ENCODE measurements at regions of chr3 and their contacts with region 1.

Region 1: DNA sequence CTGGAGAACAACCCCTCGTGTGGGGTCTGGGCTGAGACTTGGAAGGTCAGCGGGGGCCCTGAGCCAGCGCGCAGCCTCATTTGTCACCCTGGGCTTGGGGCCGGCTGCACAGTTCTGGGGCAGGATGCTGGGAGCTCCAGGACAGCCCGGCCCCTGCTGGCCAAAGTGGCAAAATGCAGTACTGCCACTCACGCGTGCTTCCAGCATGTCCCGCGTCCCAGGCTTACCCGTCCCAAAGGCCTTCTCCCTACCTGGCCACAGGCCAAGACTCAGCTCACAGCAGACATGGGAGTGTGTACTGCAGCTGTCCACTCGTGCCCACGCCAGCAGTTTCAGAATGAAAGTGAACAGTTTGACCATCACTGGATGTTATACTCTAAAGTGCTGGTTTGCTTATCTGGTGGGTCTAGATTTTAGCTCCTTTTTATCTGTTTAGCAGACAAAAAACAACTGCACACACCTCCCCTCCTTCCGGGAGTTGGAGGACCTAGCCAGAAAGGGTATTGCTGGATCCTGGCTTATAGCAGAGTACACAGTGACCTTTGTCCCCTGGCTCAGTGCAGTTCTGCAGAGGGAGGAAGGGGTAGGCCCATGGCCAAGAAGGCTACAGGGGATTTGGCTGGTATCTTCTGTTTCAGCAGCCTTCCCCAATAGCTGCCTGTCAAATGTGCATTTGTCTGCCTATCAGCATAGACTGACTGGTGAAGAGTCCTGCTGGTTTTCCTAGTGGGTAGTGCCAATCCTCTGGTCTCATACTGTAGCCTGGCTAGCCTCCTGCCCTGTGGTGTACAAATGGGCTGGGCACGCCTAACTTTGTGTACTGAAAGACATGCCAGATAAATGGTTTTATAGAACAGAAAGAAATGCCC is 23.2 kb upstream of the IP6K2 start:
- DNase-seq: peak; percentile 75
- H3K4me3 ChIP-seq: no peak overlapping the region
- H3K27ac ChIP-seq: no peak overlapping the region
- H3K4me1 ChIP-seq: peaks cover 3% of the 10 kb centered on the region
- H3K27me3 ChIP-seq: no peaks in the 10 kb centered on the region
- CTCF ChIP-seq: peak; percentile 90
- POLR2A ChIP-seq: no peak

Region 2: GRCh38 chr3:48716982-48717746 is 23.0 kb before region 1 on chr3 and contains the start of gene IP6K2:
- CTCF ChIA-PET with region 1: interaction called, 23 read pairs
- POLR2A ChIA-PET with region 1: interaction called, 4 read pairs
- dilution Hi-C with region 1: no loop called
- intact Hi-C with region 1: no loop called
- DNase-seq: peak; percentile 99
- H3K4me3 ChIP-seq: peak within 1 kb of the TSS; percentile 81 to 99 (median 93)
- H3K27ac ChIP-seq: peak within 1 kb of the TSS; percentile 88
- H3K4me1 ChIP-seq: peaks cover 8% of the 10 kb centered on the region
- H3K27me3 ChIP-seq: peaks cover 5 to 8% of the 10 kb centered on the region in 2 experiments
- CTCF ChIP-seq: no peak
- POLR2A ChIP-seq: peak; percentile 97
- total RNA-seq, gene IP6K2: 72.4 and 81.8 TPM in 2 replicates

Region 3: GRCh38 chr3:48727511-48727910 is 12.7 kb before region 1 on chr3:
- CTCF ChIA-PET with region 1: interaction called, 13 read pairs
- POLR2A ChIA-PET with region 1: no interaction called
- dilution Hi-C with region 1: no loop called
- intact Hi-C with region 1: no loop called
- DNase-seq: no peak
- H3K4me3 ChIP-seq: no peak overlapping the region
- H3K27ac ChIP-seq: no peak overlapping the region
- H3K4me1 ChIP-seq: no peaks in the 10 kb centered on the region
- H3K27me3 ChIP-seq: peaks cover 5 to 6% of the 10 kb centered on the region in 2 experiments
- CTCF ChIP-seq: no peak
- POLR2A ChIP-seq: no peak

Region 4: GRCh38 chr3:48759071-48759470 is 18.9 kb after region 1 on chr3:
- CTCF ChIA-PET with region 1: interaction called, 15 read pairs
- POLR2A ChIA-PET with region 1: no interaction called
- dilution Hi-C with region 1: no loop called
- intact Hi-C with region 1: no loop called
- DNase-seq: no peak
- H3K4me3 ChIP-seq: no peak overlapping the region
- H3K27ac ChIP-seq: no peak overlapping the region
- H3K4me1 ChIP-seq: no peaks in the 10 kb centered on the region
- H3K27me3 ChIP-seq: no peaks in the 10 kb centered on the region
- CTCF ChIP-seq: no peak
- POLR2A ChIP-seq: no peak

Region 5: DNA sequence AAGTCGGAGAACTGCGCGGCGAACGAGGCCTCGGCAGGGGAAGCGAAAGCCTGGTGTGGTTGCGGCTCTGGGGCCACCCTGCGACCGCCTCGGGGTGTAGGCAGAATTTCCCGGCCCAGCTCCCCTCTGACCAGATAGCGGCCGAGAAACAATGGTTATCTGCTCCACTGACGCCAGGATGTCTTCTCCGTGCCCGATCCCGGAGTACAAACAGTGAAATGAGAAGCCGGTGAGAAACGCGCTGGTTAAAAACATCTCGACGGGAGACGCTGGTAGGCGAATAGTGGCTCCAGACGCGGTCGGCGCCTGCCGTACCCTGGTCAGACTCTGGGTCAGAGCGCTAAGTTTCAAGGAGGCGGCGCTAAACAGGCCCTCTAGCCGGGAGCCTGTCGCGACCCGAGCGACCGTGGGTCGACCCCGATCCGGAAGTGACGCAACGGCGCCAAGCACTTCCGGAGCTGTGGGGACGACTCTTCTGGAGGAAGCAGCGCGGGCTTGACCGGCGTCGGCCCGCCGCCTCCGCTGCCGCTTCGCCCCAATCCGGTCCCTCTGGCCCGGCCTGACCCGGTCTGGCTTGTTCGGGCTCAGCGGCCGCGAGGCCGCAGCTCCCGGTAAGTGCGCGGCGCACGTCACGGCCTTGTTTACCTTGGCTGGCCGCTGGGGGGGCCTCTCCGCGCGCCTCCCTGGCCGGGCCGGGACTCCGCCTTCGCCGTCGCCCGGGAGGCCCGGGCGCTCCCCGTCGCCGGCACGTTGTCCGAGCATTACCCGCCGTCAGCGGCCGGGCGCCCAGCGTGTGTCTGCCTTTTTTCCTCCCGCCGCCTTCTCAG is 178.4 kb after region 1 on chr3 and contains the start of gene ARIH2:
- CTCF ChIA-PET with region 1: interaction called, 7 read pairs
- POLR2A ChIA-PET with region 1: no interaction called
- dilution Hi-C with region 1: no loop called
- intact Hi-C with region 1: loop called (anchors 1 kb)
- DNase-seq: peak; percentile 95
- H3K4me3 ChIP-seq: peak within 1 kb of the TSS; percentile 63 to 94 (median 84)
- H3K27ac ChIP-seq: peak within 1 kb of the TSS; percentile 99
- H3K4me1 ChIP-seq: peaks cover 14% of the 10 kb centered on the region
- H3K27me3 ChIP-seq: no peaks in the 10 kb centered on the region
- CTCF ChIP-seq: no peak
- POLR2A ChIP-seq: peak; percentile 97
- total RNA-seq, gene ARIH2: 77.2 and 85.5 TPM in 2 replicates

Region 6: DNA sequence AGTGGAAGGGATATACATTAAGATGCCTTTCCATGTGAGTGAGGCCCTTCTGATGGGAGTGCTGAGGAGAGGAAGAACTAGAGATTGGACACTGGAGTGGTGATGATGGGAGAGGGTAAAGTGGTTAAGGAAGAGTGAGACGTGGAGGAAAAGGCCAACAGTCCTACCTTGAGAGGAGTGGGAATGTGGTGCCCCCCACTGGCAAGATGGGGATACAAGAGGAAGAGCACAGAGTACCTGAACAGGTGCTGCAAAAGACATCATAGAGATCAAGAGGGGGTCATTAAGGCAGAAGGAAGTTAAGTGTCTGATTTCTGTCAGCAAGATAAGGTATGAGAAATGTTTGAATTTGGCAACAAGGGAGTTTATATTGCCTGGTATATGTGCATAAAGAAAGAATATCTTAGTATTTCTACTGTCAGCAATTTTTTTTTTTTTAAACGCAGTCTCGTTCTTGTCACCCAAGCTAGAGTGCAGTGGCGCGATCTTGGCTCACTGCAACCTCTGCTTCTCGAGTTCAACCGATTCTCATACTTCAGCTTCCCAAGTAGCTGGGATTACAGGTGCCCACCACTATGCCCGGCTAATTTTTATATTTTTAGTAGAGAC is 212.4 kb after region 1 on chr3:
- CTCF ChIA-PET with region 1: interaction called, 13 read pairs
- POLR2A ChIA-PET with region 1: no interaction called
- dilution Hi-C with region 1: no loop called
- intact Hi-C with region 1: loop called (anchors 1 kb)
- DNase-seq: peak; percentile 52
- H3K4me3 ChIP-seq: no peak overlapping the region
- H3K27ac ChIP-seq: no peak overlapping the region
- H3K4me1 ChIP-seq: no peaks in the 10 kb centered on the region
- H3K27me3 ChIP-seq: no peaks in the 10 kb centered on the region
- CTCF ChIP-seq: peak; percentile 42 to 44
- POLR2A ChIP-seq: no peak

Region 7: GRCh38 chr3:49519296-49519695 is 779.1 kb after region 1 on chr3:
- CTCF ChIA-PET with region 1: no interaction called
- POLR2A ChIA-PET with region 1: no interaction called
- dilution Hi-C with region 1: no loop called
- intact Hi-C with region 1: no loop called
- DNase-seq: no peak
- H3K4me3 ChIP-seq: no peak overlapping the region
- H3K27ac ChIP-seq: no peak overlapping the region
- H3K4me1 ChIP-seq: no peaks in the 10 kb centered on the region
- H3K27me3 ChIP-seq: no peaks in the 10 kb centered on the region
- CTCF ChIP-seq: no peak
- POLR2A ChIP-seq: no peak

Measured in endothelial cell of umbilical vein (primary cell).